ENCODE measurements at regions of chr19 and their contacts with region 1.

Region 1: GRCh38 chr19:6066661-6067646 is 43.3 kb downstream of the RFX2 start:
- DNase-seq: peak; percentile 91 to 99 (median 94)
- ATAC-seq: peak; percentile 81 to 91 (median 88)
- H3K4me3 ChIP-seq: peak overlapping the region in 5 of 12 donors; percentile 4 to 23 (median 15)
- H3K27ac ChIP-seq: peak overlapping the region; percentile 59 to 94 (median 87)
- H3K4me1 ChIP-seq: peaks cover 7 to 70% (median 50%) of the 10 kb centered on the region in 12 donors
- H3K27me3 ChIP-seq: no peaks in the 10 kb centered on the region
- CTCF ChIP-seq: no peak
- POLR2A ChIP-seq: no peak

Region 2: DNA sequence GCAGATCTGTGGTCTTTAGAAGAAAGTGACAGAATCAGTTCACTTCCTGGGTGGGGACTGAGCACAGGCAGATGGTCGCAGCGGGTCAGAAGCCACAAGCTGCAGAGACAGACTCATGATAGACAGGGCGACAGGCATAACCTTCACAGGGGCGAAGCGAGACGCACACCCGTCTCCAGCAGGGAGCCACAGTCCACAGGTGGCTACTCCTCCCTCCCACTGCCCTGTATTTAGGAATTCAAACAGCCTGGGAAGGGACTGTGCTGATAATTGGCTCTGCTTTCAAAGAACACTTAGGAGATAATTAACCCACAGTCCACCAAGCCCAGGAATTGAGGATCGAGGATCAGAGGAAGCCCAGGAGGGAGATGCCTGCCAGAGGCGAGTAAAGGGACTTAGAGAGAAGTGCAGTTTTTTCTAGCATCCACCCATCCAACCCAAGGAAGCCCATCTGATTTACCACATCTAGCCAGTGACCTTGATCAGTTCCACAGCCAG is 20.2 kb after region 1 on chr19:
- intact Hi-C with region 1: loop called in 1 of 10 experiments (anchors 2 kb)
- DNase-seq: peak in 1 of 5 donors; percentile 41
- ATAC-seq: peak; percentile 20 to 32 (median 29)
- H3K4me3 ChIP-seq: peak overlapping the region in 2 of 12 donors; percentile 16 to 33
- H3K27ac ChIP-seq: peak overlapping the region; percentile 8 to 80 (median 50)
- H3K4me1 ChIP-seq: peaks cover 0 to 51% (median 28%) of the 10 kb centered on the region in 12 donors
- H3K27me3 ChIP-seq: no peaks in the 10 kb centered on the region
- CTCF ChIP-seq: no peak
- POLR2A ChIP-seq: no peak

Region 3: GRCh38 chr19:6110360-6110977 is 43.5 kb after region 1 on chr19 and contains the start of gene RFX2:
- intact Hi-C with region 1: loop called in 5 of 10 experiments (anchors 1 to 5 kb)
- DNase-seq: peak; percentile 99
- ATAC-seq: peak; percentile 99 to 100 (median 99)
- H3K4me3 ChIP-seq: peak within 1 kb of the TSS; percentile 48 to 84 (median 70)
- H3K27ac ChIP-seq: peak within 1 kb of the TSS; percentile 17 to 93 (median 84)
- H3K4me1 ChIP-seq: peaks cover 0 to 33% (median 12%) of the 10 kb centered on the region in 12 donors
- H3K27me3 ChIP-seq: no peaks in the 10 kb centered on the region
- CTCF ChIP-seq: peak in 1 of 12 donors; percentile 10
- POLR2A ChIP-seq: peak in 1 of 2 donors; percentile 70
- total RNA-seq, gene RFX2: 2.8 to 20.0 (median 5.8) TPM

Region 4: GRCh38 chr19:6161271-6161850 is 94.4 kb after region 1 on chr19:
- intact Hi-C with region 1: no loop called
- DNase-seq: peak in 4 of 5 donors; percentile 39 to 64 (median 50)
- ATAC-seq: peak; percentile 80 to 96 (median 84)
- H3K4me3 ChIP-seq: no peak overlapping the region
- H3K27ac ChIP-seq: peak overlapping the region in 6 of 12 donors; percentile 19 to 56 (median 46)
- H3K4me1 ChIP-seq: peaks cover 0 to 6% (median 0%) of the 10 kb centered on the region in 12 donors
- H3K27me3 ChIP-seq: no peaks in the 10 kb centered on the region
- CTCF ChIP-seq: no peak
- POLR2A ChIP-seq: no peak